Posterior vena cava (tissue), 2 donors: ENCODE measurements at regions of chr1 and their contacts with region 1.

Region 1: GRCh38 chr1:231364192-231364591 is 26.1 kb downstream of the SPRTN start:
- DNase-seq: no peak

Region 2: DNA sequence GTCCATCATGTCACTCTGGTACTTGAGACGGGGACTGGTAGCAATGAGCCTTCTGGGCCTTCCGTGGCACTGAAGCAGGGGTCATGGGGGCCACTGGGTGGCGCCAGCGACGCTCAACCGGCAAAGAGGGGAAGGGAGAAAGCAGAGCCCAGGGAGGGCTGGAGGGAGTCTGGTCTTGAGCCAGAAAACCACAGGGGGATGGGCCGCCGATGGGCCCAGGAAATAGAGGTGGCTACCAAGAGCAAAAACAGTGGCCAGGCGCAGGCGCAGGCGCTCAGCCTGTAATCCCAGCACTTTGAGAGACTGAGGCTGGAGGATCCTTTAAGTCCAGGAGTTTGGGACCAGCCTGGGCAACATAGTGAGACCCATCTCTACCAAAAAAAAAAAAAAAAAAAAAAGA is 48.3 kb before region 1 on chr1:
- intact Hi-C with region 1: no loop called
- DNase-seq: no peak

Region 3: GRCh38 chr1:231596337-231596791 is 232.2 kb after region 1 on chr1:
- intact Hi-C with region 1: loop called (anchors 5 to 10 kb)
- DNase-seq: no peak